ENCODE measurements at regions of chr6 and their contacts with region 1.

Region 1: DNA sequence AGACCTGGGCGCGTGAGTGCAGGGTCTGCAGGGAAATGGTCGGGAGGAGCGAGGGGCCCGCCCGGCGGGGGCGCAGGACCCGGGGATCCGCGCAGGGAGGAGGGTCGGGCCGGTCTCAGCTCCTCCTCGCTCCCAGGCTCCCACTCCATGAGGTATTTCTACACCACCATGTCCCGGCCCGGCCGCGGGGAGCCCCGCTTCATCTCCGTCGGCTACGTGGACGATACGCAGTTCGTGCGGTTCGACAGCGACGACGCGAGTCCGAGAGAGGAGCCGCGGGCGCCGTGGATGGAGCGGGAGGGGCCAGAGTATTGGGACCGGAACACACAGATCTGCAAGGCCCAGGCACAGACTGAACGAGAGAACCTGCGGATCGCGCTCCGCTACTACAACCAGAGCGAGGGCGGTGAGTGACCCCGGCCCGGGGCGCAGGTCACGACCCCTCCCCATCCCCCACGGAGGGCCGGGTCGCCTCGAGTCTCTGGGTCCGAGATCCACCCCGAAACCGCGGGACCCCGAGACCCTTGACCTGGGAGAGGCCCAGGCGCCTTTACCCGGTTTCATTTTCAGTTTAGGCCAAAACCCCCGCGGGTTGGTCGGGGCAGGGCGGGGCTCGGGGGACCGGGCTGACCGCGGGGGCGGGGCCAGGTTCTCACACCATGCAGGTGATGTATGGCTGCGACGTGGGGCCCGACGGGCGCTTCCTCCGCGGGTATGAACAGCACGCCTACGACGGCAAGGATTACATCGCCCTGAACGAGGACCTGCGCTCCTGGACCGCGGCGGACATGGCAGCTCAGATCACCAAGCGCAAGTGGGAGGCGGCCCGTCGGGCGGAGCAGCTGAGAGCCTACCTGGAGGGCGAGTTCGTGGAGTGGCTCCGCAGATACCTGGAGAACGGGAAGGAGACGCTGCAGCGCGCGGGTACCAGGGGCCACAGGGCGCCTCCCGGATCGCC is 54.2 kb upstream of the HLA-A start:
- DNase-seq: peak in 1 of 2 donors; percentile 87
- H3K4me3 ChIP-seq: peak overlapping the region in 2 of 3 donors; percentile 51 to 93
- H3K27ac ChIP-seq: peak overlapping the region in 1 of 2 donors; percentile 99
- H3K4me1 ChIP-seq: no peaks in the 10 kb centered on the region
- H3K27me3 ChIP-seq: no peaks in the 10 kb centered on the region
- CTCF ChIP-seq: no peak
- POLR2A ChIP-seq: no peak

Region 2: DNA sequence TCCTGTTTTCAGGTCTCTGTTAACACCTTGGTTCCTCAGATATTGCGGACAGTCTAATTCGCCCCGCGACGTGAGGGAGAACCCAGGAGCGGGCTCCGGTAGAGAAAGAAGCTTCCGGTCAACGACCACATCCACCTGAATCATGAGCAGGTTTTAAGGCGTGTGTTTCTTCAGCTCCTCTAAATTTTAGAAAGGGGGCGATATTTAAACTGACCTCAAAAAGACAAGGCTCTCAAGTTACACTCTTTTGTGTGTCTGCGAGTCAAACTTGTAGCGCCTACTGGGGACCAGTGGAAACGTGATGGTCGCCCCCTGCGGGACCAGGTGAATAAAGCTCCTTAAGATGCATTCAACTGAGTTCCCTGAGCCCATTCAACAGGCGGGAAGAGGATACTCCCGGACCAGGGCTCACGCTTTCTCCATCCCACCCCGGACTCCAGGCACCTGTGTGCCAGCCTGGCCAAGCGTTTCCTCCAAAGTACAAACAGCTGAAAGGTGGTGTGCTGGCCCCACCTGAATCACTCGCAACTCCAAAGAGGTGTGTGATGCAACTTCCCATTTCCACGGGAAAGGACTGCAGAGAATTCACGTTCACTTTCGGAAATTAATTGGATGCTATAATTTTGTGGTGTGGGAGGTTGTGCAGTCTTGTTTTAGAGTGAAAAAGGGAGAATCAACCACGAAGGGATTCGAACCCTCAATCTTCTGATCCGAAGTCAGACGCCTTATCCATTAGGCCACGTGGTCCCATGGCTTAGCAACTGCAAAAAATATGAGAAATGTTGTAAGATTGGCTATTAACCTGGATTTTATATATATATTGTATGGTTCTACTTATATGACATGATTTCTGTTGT is 1345.4 kb before region 1 on chr6:
- intact Hi-C with region 1: no loop called
- DNase-seq: no peak
- H3K4me3 ChIP-seq: peak overlapping the region in 2 of 3 donors; percentile 46 to 61
- H3K27ac ChIP-seq: no peak overlapping the region
- H3K4me1 ChIP-seq: no peaks in the 10 kb centered on the region
- H3K27me3 ChIP-seq: peaks cover 0 to 16% of the 10 kb centered on the region in 2 donors
- CTCF ChIP-seq: peak in 1 of 3 donors; percentile 22
- POLR2A ChIP-seq: no peak

Region 3: GRCh38 chr6:29907637-29908340 is 19.7 kb after region 1 on chr6:
- intact Hi-C with region 1: loop called (anchors 2 kb)
- DNase-seq: no peak
- H3K4me3 ChIP-seq: no peak overlapping the region
- H3K27ac ChIP-seq: no peak overlapping the region
- H3K4me1 ChIP-seq: no peaks in the 10 kb centered on the region
- H3K27me3 ChIP-seq: no peaks in the 10 kb centered on the region
- CTCF ChIP-seq: no peak
- POLR2A ChIP-seq: no peak

Measured in breast epithelium (tissue), 4 donors.